ENCODE measurements at regions of chr4 and their contacts with region 1.

Region 1: DNA sequence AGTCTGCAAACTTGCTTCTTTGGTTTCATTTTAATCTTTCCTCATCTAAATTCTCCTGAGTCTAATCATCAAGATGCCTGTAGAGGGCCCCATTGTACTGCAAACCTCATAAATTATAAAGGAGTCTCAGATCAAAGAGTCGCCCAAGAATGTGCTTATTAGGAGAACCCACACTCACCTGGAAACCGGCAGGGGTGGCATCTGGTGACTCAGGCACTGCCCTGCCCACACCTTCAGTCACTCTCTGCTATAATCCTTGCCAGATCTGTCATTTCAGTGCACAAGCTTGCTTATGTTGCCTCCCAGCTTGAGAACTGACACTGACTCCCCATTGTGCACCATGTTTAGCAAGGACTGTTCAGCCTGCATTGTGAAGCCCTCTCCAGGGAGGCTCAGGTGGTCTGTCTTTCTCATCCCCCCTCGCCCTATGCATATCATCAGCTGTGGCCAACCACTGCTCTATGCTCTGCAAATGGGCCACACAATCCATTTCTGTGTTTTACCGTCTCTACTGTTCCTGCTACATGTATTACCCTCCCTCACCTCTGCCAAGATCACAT is 12.4 kb downstream of the EPGN start:
- DNase-seq: no peak
- H3K4me3 ChIP-seq: no peak overlapping the region
- H3K27me3 ChIP-seq: 0 out of 2 replicates have a peak, but pooled peaks cover 1% of the 10 kb centered on the region
- CTCF ChIP-seq: peak; percentile 61

Region 2: GRCh38 chr4:74370912-74371311 is 50.3 kb after region 1 on chr4:
- CTCF ChIA-PET with region 1: interaction called, 10 read pairs
- POLR2A ChIA-PET with region 1: no interaction called
- DNase-seq: no peak
- H3K4me3 ChIP-seq: no peak overlapping the region
- H3K27me3 ChIP-seq: no peaks in the 10 kb centered on the region
- CTCF ChIP-seq: peak; percentile 87

Region 3: GRCh38 chr4:74682567-74683359 is 362.1 kb after region 1 on chr4:
- CTCF ChIA-PET with region 1: interaction called, 175 read pairs
- POLR2A ChIA-PET with region 1: no interaction called
- DNase-seq: peak; percentile 57
- H3K4me3 ChIP-seq: no peak overlapping the region
- H3K27me3 ChIP-seq: no peaks in the 10 kb centered on the region
- CTCF ChIP-seq: no peak